ENCODE measurements at regions of chr1 and their contacts with region 1.

Region 1: DNA sequence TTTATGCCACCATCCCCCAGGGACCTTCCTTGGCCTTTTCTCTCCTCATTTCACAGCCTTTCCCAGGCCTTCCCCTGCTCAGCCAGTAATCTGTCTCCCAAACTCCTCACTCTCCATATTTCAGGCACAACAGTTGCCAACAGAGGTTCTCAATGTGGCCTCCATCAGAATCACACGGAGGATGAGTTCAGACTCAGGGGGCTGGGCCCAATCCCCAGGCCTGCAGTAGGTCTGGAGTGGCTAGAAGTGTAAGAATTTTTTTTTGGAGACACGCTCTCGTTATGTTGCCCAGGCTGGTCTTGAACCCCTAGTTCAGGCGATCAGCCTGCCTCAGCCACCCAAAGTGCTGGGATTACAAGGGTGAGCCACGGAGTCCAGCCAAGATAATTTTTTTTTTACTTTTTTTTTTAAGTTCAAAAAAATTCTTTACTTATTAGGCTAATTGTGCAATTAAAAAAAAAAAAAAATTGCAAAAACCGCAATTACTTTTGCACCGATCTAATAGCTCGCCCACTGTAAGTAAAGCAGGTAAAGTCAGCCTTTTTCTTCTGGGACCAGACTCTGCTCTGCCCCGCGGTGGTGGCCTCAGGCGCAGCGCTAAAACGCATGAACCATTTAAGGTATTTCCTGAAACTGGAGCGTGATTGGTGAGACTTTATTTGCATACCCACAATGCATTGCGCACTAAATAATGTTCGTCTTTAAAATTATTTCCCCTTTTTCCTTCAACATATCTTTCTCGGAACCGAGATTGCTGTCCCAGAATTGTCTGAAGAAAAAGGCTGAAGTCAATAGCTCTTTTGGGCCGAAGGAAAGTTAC is 18.7 kb downstream of the KIAA2013 start:
- DNase-seq: peak; percentile 83

Region 2: GRCh38 chr1:11735854-11736745 is 171.4 kb before region 1 on chr1 and contains the start of gene AGTRAP:
- CTCF ChIA-PET with region 1: no interaction called
- POLR2A ChIA-PET with region 1: interaction called, 13 read pairs
- DNase-seq: peak; percentile 96

Region 3: GRCh38 chr1:11768821-11769220 is 138.7 kb before region 1 on chr1:
- CTCF ChIA-PET with region 1: no interaction called
- POLR2A ChIA-PET with region 1: no interaction called
- DNase-seq: no peak

Region 4: DNA sequence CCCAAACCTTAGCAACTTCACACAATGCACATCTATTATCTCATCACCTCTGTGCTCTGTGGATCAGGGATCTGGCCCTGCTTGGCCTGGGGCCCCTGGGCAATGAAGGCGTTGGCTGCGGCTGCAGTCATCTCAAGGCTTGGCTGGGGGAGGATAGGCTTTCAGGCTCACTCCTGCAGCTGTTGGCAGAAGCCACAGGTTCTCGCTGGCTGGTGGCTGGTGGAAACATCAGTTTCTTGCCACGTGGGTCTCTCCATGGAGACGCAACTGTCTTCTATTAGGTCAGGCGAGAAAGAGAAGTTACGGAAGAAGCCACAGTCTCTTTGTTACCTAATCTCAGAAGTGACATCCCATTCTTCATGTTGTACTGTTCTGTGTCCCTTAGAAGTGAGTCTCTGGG is 56.3 kb before region 1 on chr1:
- CTCF ChIA-PET with region 1: no interaction called
- POLR2A ChIA-PET with region 1: interaction called, 14 read pairs
- DNase-seq: no peak

Region 5: DNA sequence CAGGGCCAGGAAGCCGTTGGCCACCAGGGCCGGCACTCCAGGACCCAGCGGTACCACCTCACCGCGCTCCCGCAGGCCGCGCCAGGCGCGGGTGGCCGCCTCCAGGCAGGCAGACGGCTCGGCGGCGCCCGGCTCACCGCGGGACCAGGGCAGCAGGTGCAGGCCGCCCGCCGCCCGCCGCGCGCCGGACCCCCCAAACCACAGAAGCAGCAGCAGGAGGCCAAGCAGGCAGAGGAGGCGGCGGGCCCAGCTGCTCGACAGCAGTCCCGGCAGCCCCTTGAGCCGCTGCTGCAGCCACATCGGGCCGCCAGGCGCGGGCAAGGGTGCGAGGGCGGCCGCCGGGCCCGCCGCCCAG is 18.4 kb after region 1 on chr1:
- CTCF ChIA-PET with region 1: interaction called, 3 read pairs
- POLR2A ChIA-PET with region 1: interaction called, 44 read pairs
- DNase-seq: no peak

Region 6: GRCh38 chr1:11961230-11961629 is 53.7 kb after region 1 on chr1:
- CTCF ChIA-PET with region 1: no interaction called
- POLR2A ChIA-PET with region 1: interaction called, 66 read pairs
- DNase-seq: no peak

Region 7: DNA sequence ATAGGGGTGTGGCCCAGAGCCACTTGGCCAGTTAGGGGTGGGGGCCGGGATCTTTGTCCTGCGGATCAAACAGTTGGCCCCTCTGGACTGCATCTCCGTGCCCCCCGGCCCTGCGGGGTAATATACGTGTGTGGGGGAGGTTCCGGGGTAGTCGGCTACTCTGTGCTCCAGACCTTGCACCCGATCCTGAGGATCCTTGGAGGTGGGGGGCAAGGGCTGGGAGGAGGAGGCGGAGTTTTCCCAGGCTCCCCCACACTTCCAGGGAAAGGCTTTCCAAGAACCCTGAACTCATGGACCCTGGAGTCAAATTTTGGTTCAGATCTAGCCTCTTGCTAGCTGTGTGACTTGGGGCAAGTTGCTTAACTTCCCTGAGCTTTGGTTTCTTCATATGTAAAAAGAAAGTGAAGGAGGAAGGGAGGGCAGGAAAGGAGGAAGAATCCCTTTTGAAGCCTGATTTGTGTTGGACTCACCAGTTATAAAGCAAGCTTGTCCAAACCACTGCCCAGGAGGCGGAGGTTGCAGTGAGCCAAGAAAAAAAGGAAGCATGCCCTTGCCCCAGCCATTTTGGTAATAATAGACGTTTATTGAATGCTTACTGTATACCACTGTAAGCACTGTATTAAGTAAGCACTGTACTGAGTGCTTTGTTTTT is 112.5 kb after region 1 on chr1:
- CTCF ChIA-PET with region 1: no interaction called
- POLR2A ChIA-PET with region 1: interaction called, 23 read pairs
- DNase-seq: no peak

Measured in HEK293T (cell line).